Right ventricle myocardium inferior (tissue), 1 donor: ENCODE measurements at regions of chr20 and their contacts with region 1.

Region 1: DNA sequence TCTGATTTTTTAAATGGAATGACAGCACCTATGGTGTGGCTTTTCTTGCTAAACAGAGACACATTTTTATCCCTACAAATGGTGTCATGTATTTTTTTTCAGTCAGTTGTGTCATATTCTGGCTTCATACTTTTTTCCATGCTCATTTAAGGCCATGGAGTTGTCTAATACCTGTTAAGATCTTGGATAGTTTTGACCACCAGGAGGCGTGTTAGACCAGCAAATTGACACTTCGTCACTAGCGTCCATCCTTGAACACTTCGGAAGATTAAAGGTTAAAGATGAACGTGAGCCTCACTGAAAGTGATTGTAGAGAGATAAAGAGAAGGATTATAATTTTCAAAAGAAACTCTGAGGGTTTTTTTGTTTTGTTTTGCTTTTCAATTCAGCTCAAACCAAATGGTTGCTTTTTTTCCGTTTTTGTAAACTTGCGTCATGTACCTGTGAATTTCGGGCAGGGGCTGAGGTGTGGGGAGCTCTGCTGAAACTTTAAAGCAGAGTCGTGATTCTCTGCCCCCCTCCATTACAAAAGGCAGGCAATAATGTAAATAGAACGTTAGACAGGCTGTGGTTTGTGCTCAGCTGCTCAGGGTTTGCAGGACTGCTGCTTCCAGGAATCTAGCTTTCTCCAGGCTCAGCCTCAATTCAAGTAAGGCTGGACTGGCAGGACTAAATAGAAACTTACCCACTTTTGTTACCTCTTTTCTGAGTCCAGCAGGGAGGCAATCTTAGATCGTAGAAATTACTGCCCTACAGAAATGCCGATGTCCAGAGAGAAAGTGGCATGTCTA is 245.1 kb downstream of the FOXA2 start:
- DNase-seq: no peak
- ATAC-seq: no peak

Region 2: DNA sequence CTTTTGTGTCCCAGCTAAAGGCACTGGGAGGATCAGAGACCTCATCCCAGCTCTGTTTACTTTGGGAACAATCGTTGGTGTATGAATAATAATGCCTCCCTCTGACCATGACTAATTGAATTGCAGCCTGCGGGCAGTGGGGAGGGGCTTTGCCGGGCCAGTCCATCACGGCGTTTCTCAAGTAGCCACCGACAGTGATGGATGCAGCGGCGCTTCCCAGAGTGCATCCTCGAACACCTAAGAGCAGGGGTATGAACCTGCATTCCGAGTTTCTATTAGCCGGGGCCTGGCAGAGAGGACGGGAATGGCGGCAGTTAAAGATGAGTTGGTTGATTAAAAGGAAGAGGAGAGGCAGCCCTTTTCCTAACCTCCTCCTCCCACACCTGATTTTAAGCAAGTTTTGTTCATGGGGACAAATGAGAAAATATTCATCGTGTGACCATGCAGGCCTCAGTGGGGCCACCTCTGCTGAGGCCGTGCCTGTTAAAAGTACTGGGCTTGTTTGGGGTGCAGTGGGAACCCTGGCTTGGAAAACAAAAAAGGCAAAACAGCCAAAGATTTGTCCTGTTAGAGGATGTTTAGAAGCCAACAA is 91.0 kb after region 1 on chr20:
- intact Hi-C with region 1: no loop called
- DNase-seq: no peak
- ATAC-seq: no peak

Region 3: GRCh38 chr20:22449188-22449973 is 110.1 kb after region 1 on chr20:
- intact Hi-C with region 1: no loop called
- DNase-seq: no peak
- ATAC-seq: no peak

Region 4: GRCh38 chr20:22511943-22512910 is 172.9 kb after region 1 on chr20:
- intact Hi-C with region 1: no loop called
- DNase-seq: no peak
- ATAC-seq: no peak

Region 5: GRCh38 chr20:22684072-22684762 is 344.9 kb after region 1 on chr20:
- intact Hi-C with region 1: loop called (anchors 1 kb)
- DNase-seq: no peak
- ATAC-seq: peak; percentile 79

Region 6: GRCh38 chr20:23350196-23350903 is 1011.1 kb after region 1 on chr20 and contains the start of gene NXT1:
- intact Hi-C with region 1: loop called (anchors 5 kb)
- DNase-seq: peak; percentile 97
- ATAC-seq: peak; percentile 95
- total RNA-seq, gene NXT1: 6.5 TPM